Naive thymus-derived CD4-positive, alpha-beta T cell (primary cell): ENCODE measurements at regions of chr6 and their contacts with region 1.

Region 1: GRCh38 chr6:28737750-28738395 is 185.9 kb downstream of the TRIM27 start:
- DNase-seq: no peak
- ATAC-seq: no peak
- H3K4me3 ChIP-seq: no peak overlapping the region
- H3K4me3 Mint-ChIP-seq: peak overlapping the region in 6 of 10 donors; percentile 12 to 65 (median 24)
- H3K27ac ChIP-seq: no peak overlapping the region
- H3K27ac Mint-ChIP-seq: peak overlapping the region in 4 of 9 donors; percentile 48 to 82 (median 64)
- H3K4me1 ChIP-seq: no peaks in the 10 kb centered on the region
- H3K4me1 Mint-ChIP-seq: peaks cover 0 to 12% (median 2%) of the 10 kb centered on the region in 7 donors
- H3K27me3 ChIP-seq: peaks cover 37 to 72% of the 10 kb centered on the region in 2 donors
- H3K27me3 Mint-ChIP-seq: peaks cover 70 to 77% (median 75%) of the 10 kb centered on the region in 5 donors

Region 2: DNA sequence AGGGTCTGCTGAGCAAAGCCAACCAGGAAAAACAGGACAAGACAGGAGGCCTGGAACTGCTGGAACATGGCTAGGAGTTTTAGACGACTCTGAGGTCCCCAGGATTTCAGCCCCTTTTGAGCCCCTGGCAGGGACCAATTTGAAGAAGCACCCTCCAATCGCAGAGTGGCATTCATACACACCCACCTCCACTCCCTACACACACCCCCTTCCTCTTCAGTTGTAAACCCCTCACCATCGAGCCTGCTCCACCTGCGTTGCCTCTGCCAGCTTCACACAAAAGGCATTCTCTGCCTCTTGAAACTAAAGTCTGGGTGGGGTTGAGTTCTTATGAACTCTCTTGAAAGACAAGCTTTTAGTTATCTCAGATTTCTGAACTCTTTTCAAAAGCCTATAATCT is 222.2 kb before region 1 on chr6 and contains the start of gene GPX6:
- CTCF ChIA-PET with region 1: no interaction called
- POLR2A ChIA-PET with region 1: no interaction called
- intact Hi-C with region 1: no loop called
- DNase-seq: no peak
- ATAC-seq: no peak
- H3K4me3 ChIP-seq: no peak within 1 kb of the TSS
- H3K4me3 Mint-ChIP-seq: no peak within 1 kb of the TSS
- H3K27ac ChIP-seq: no peak within 1 kb of the TSS
- H3K27ac Mint-ChIP-seq: no peak within 1 kb of the TSS
- H3K4me1 ChIP-seq: no peaks in the 10 kb centered on the region
- H3K4me1 Mint-ChIP-seq: no peaks in the 10 kb centered on the region
- H3K27me3 ChIP-seq: no peaks in the 10 kb centered on the region
- H3K27me3 Mint-ChIP-seq: peaks cover 0 to 63% (median 37%) of the 10 kb centered on the region in 5 donors
- total RNA-seq, gene GPX6: not detected

Region 3: DNA sequence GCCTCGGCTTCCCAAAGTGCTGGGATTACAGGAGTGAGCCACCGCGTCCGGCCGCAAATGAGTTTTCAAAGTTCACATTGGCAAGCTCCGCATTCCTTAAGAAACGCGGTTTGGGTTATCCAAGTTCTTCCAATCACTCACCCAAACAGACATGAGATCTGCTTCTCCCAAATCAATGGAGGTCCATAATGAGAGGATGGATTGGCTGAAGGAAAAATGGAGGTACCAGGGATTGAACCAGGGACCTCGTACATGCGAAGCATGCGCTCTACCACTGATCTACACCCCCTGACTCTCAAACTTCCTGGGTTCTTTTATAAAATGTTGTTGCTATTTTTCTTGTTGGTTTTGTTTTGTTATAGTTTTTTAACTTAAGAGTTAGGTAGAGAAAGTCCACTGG is 42.2 kb before region 1 on chr6:
- CTCF ChIA-PET with region 1: no interaction called
- POLR2A ChIA-PET with region 1: no interaction called
- intact Hi-C with region 1: loop called in 1 of 2 experiments (anchors 5 kb)
- DNase-seq: no peak
- ATAC-seq: no peak
- H3K4me3 ChIP-seq: no peak overlapping the region
- H3K4me3 Mint-ChIP-seq: peak overlapping the region in 5 of 10 donors; percentile 5 to 67 (median 39)
- H3K27ac ChIP-seq: no peak overlapping the region
- H3K27ac Mint-ChIP-seq: peak overlapping the region in 1 of 9 donors; percentile 13
- H3K4me1 ChIP-seq: no peaks in the 10 kb centered on the region
- H3K4me1 Mint-ChIP-seq: peaks cover 6 to 32% (median 24%) of the 10 kb centered on the region in 7 donors
- H3K27me3 ChIP-seq: peaks cover 11 to 19% of the 10 kb centered on the region in 2 donors
- H3K27me3 Mint-ChIP-seq: peaks cover 86 to 95% (median 93%) of the 10 kb centered on the region in 5 donors

Region 4: DNA sequence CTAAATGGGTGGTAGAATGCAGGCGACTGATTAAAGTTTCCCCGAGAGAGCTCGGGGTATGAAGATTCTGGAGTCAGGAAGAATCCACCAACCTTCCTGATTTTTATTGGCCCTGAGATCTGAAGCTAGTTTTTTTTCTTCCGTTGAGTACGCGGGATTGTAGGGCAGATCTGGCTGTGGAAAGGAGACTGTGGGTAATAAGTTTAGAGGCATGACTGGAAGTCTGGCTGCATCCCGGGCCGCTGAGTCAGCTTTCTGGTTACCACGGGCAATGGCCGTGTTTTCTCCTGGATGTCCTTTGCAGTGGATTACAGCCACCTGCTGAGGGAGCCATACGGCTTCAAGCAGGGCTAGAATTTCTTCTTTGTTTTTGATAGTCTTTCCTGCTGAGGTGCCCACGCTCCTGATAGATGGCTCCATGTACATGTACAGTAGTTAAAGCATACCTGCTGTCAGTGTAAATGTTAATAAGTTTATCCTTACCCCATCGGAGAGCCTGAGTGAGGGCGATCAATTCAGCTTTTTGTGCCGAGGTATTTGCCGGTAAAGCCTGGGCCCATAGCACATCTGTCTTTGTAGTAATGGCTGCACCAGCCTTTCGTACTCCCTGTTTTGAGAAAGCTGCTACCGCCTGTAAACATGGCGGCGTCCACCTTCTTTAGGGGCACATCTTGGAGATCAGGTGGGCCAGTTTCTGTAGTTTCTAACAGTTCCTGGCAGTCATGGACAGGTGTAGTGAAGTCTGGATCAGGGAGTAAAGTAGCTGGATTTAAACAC is 31.9 kb after region 1 on chr6:
- CTCF ChIA-PET with region 1: no interaction called
- POLR2A ChIA-PET with region 1: no interaction called
- intact Hi-C with region 1: loop called in 1 of 2 experiments (anchors 2 kb)
- DNase-seq: no peak
- ATAC-seq: no peak
- H3K4me3 ChIP-seq: no peak overlapping the region
- H3K4me3 Mint-ChIP-seq: no peak overlapping the region
- H3K27ac ChIP-seq: no peak overlapping the region
- H3K27ac Mint-ChIP-seq: peak overlapping the region in 1 of 9 donors; percentile 33
- H3K4me1 ChIP-seq: no peaks in the 10 kb centered on the region
- H3K4me1 Mint-ChIP-seq: peaks cover 6 to 17% (median 10%) of the 10 kb centered on the region in 7 donors
- H3K27me3 ChIP-seq: peaks cover 18 to 71% of the 10 kb centered on the region in 2 donors
- H3K27me3 Mint-ChIP-seq: peaks cover 93 to 96% (median 95%) of the 10 kb centered on the region in 5 donors

Region 5: GRCh38 chr6:28816909-28817807 is 79.3 kb after region 1 on chr6:
- CTCF ChIA-PET with region 1: no interaction called
- POLR2A ChIA-PET with region 1: no interaction called
- intact Hi-C with region 1: loop called in 1 of 2 experiments (anchors 2 kb)
- DNase-seq: no peak
- ATAC-seq: no peak
- H3K4me3 ChIP-seq: no peak overlapping the region
- H3K4me3 Mint-ChIP-seq: peak overlapping the region in 2 of 10 donors; percentile 7 to 8
- H3K27ac ChIP-seq: no peak overlapping the region
- H3K27ac Mint-ChIP-seq: peak overlapping the region in 2 of 9 donors; percentile 44 to 49
- H3K4me1 ChIP-seq: no peaks in the 10 kb centered on the region
- H3K4me1 Mint-ChIP-seq: peaks cover 2 to 21% (median 9%) of the 10 kb centered on the region in 7 donors
- H3K27me3 ChIP-seq: peaks cover 23 to 45% of the 10 kb centered on the region in 2 donors
- H3K27me3 Mint-ChIP-seq: peaks cover 75 to 91% (median 88%) of the 10 kb centered on the region in 5 donors

Region 6: GRCh38 chr6:29447670-29448069 is 709.8 kb after region 1 on chr6:
- CTCF ChIA-PET with region 1: no interaction called
- POLR2A ChIA-PET with region 1: no interaction called
- intact Hi-C with region 1: no loop called
- DNase-seq: no peak
- ATAC-seq: no peak
- H3K4me3 ChIP-seq: no peak overlapping the region
- H3K4me3 Mint-ChIP-seq: no peak overlapping the region
- H3K27ac ChIP-seq: no peak overlapping the region
- H3K27ac Mint-ChIP-seq: no peak overlapping the region
- H3K4me1 ChIP-seq: no peaks in the 10 kb centered on the region
- H3K4me1 Mint-ChIP-seq: no peaks in the 10 kb centered on the region
- H3K27me3 ChIP-seq: peaks cover 0 to 6% of the 10 kb centered on the region in 2 donors
- H3K27me3 Mint-ChIP-seq: peaks cover 11 to 83% (median 78%) of the 10 kb centered on the region in 5 donors